HCT116 (cell line): ENCODE measurements at regions of chr10 and their contacts with region 1.

Region 1: DNA sequence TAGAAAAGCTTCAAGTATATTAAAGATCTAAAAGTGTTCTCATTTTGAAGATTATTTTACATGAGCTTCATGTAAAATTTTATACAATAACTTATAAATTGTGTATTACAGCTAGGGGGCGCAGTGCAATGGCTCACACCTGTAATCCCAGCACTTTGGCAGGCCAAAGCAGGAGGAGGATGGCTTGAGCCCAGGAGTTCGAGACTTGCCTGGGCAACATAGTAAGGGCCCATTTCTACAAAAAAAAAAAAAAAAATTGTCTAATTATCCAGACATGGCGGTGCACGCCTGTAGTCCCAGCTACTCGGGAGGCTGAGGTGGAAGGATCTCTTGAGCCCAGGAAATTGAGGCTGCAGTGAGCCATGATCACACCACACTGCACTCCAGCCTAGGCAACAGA is 16.6 kb downstream of the ACBD5 start:
- DNase-seq: no peak
- ATAC-seq: peak; percentile 94
- H3K4me3 ChIP-seq: no peak overlapping the region
- H3K27ac ChIP-seq: no peak overlapping the region
- H3K4me1 ChIP-seq: no peaks in the 10 kb centered on the region
- H3K27me3 ChIP-seq: no peaks in the 10 kb centered on the region
- CTCF ChIP-seq: peak; percentile 34 to 68 (median 65); a peak in 5 of 6 replicates
- POLR2A ChIP-seq: no peak
- RAD21 ChIP-seq: peak; percentile 44

Region 2: DNA sequence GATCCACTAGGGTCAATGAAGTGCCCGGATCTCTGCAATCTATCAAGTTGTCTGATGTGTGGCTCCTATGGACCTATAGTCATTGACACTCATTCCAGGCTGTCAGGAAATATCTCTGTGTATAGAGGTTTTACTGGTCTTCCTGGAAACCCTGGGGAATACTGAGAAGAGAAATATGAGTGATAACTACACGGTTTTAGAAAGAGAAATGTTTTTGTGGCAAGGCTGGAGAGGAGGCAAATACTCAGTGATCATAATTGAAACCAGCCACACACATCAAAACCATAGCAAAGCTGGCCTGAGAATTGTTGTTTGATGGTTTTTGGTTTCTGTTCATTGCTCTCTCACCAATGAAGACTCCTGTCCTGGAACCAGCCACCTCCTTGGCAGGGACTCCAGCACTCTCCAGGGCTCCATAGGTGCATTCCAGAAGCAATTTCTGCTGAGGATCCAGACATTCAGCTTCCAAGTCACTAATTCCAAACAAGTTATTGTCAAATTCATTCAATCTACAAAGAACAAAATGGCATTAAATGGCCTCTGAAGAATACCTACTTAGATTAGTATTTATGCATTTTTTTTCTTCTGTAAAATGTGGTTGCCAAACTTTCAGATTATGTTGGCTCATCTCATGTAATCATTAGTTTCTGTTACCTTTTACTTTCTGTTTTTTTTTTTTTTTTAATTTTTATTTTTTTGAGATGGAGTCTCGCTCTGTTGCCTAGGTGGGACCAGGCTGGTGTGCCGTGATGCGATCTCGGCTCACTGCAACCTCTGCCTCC is 254.6 kb before region 1 on chr10:
- CTCF ChIA-PET with region 1: no interaction called
- POLR2A ChIA-PET with region 1: no interaction called
- RAD21 ChIA-PET with region 1: no interaction called
- intact Hi-C with region 1: no loop called
- DNase-seq: no peak
- ATAC-seq: no peak
- H3K4me3 ChIP-seq: no peak overlapping the region
- H3K27ac ChIP-seq: no peak overlapping the region
- H3K4me1 ChIP-seq: no peaks in the 10 kb centered on the region
- H3K27me3 ChIP-seq: no peaks in the 10 kb centered on the region
- CTCF ChIP-seq: no peak
- POLR2A ChIP-seq: no peak
- RAD21 ChIP-seq: no peak

Region 3: GRCh38 chr10:27235706-27236105 is 11.7 kb after region 1 on chr10:
- CTCF ChIA-PET with region 1: interaction called, 21 read pairs
- POLR2A ChIA-PET with region 1: no interaction called
- RAD21 ChIA-PET with region 1: no interaction called
- intact Hi-C with region 1: no loop called
- DNase-seq: no peak
- ATAC-seq: no peak
- H3K4me3 ChIP-seq: no peak overlapping the region
- H3K27ac ChIP-seq: no peak overlapping the region
- H3K4me1 ChIP-seq: 0 out of 4 replicates have a peak, but pooled peaks cover 0 to 3% of the 10 kb centered on the region in 2 experiments
- H3K27me3 ChIP-seq: no peaks in the 10 kb centered on the region
- CTCF ChIP-seq: no peak
- POLR2A ChIP-seq: no peak
- RAD21 ChIP-seq: no peak

Region 4: DNA sequence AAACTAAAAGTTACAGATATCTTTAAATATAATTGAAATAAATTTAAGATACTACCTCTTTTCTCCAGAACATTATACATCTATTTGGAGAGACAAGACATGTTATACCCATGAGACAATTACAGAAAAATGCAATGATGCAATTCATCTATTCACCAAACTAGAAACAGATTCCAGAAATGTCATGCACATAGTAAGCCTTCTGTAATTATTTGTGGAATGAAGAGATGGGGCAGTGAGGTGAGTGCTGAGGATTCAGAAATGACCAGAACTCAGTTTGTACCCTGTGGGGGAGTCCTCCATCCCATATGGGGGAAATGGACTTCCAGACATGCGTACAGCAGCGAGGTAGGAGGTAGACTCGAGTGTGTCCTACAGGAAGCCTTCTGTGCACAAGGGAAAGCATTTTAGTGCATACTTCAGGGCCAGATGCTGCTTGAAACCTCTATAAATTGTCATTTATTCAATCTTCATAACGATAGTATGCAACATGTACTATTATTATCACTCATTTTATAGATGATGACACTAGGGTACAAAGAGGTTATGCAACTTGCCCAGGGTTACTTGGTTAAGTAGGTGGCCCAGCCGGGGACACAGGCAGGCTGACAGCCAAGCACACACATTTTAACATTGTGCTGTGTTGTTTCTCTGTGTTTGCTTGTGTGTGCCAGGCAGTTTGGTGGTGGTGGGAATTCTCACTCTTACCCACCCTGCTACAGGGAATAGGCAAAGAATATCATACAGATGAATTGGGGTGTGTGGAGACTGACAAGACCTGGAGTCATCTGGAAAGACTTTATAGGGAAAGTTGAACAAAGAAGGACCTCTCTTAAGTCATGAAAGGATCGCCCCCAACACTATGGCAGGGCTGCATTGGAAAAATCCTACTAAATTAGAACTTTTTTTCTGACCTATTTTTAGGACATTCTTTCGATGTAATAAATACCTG is 422.5 kb after region 1 on chr10:
- CTCF ChIA-PET with region 1: no interaction called
- POLR2A ChIA-PET with region 1: no interaction called
- RAD21 ChIA-PET with region 1: no interaction called
- intact Hi-C with region 1: no loop called
- DNase-seq: no peak
- ATAC-seq: no peak
- H3K4me3 ChIP-seq: no peak overlapping the region
- H3K27ac ChIP-seq: no peak overlapping the region
- H3K4me1 ChIP-seq: no peaks in the 10 kb centered on the region
- H3K27me3 ChIP-seq: no peaks in the 10 kb centered on the region
- CTCF ChIP-seq: no peak
- POLR2A ChIP-seq: no peak
- RAD21 ChIP-seq: no peak